PC-9 (cell line): ENCODE measurements at regions of chr19 and their contacts with region 1.

Region 1: DNA sequence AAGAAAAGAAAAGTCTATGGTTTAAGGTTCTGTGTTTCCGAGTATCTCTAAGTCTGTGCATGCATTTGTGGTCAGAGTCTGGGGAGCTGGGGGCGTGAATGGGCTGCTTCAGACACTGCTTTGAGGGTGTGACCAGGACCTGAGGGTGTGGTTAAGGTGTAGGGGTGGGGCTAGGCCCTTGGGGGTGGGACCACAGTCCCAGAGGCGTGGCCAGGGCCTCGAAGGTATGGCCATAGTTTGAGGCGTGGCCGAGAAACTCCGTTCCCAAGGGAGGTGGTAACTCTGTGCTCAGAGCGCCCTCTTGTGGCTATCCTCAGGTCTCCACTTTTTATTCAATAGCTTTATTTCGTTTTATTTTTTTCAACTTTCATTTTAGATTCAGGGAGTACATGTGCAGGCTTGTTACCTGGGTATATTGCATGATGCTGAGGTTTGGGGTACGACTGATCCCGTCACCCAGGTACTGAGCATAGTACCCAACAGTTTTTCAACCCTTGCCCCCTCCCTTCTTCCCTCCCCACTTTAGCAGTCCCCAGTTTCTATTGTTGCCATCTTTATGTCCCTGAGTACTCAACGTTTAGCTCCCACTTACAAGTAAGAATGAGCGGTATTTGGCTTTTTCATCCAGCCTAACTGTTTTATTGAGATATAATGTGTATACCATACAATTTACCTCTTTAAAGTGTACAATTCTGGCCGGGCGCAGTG is 7.0 kb upstream of the CBLC start:
- DNase-seq: peak; percentile 90 to 97
- H3K4me3 ChIP-seq: no peak overlapping the region
- H3K27ac ChIP-seq: peak overlapping the region; percentile 48
- H3K4me1 ChIP-seq: peaks cover 48% of the 10 kb centered on the region
- H3K27me3 ChIP-seq: no peaks in the 10 kb centered on the region
- CTCF ChIP-seq: peak; percentile 96

Region 2: GRCh38 chr19:44512326-44513298 is 258.1 kb before region 1 on chr19:
- CTCF ChIA-PET with region 1: no interaction called
- POLR2A ChIA-PET with region 1: no interaction called
- intact Hi-C with region 1: loop called (anchors 5 kb)
- DNase-seq: peak; percentile 50 to 73
- H3K4me3 ChIP-seq: no peak overlapping the region
- H3K27ac ChIP-seq: no peak overlapping the region
- H3K4me1 ChIP-seq: no peaks in the 10 kb centered on the region; the same call in 1 of the 2 replicates
- H3K27me3 ChIP-seq: peaks cover 10% of the 10 kb centered on the region; the same call in 1 of the 2 replicates
- CTCF ChIP-seq: peak; percentile 77

Region 3: DNA sequence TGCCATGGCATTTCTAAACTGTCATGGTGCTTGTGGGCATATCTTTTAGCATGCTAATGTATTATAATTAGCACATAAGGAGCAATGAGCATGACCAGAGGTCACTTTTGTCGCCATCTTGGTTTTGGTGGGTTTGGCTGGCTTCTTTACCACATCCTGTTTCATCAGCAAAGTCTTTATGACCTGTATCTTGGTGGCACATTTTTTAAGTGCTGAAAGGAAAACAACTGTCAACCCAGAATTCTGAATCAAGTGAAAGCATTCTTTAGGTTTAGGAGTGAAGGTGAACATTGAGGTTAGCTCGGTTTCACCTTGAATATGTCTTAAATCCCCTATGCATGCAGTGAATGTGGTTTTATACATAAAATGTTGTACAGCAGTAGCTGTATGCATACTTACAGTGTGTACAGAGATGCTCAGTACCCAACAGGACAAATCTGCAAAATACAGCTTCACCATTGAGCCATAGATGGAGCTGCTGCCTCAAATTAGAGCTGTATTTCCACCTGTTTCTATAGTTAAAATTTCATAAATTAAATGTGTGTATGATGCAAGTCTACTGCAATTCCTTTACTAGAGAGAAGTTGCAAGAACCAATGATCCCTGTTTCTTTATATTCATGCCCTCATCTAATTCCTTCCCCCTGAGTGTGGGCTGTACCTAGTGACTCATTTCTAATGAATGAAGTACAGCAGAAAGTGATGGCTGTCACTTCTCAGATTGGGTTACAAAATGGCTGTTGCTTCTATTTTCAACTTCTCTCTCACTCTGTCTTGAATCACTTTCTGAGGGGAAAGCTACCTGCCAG is 182.5 kb before region 1 on chr19:
- CTCF ChIA-PET with region 1: interaction called, 4 read pairs
- POLR2A ChIA-PET with region 1: no interaction called
- intact Hi-C with region 1: loop called (anchors 1 kb)
- DNase-seq: peak; percentile 64 to 99
- H3K4me3 ChIP-seq: peak overlapping the region; percentile 28
- H3K27ac ChIP-seq: peak overlapping the region; percentile 98
- H3K4me1 ChIP-seq: peaks cover 82% of the 10 kb centered on the region
- H3K27me3 ChIP-seq: no peaks in the 10 kb centered on the region
- CTCF ChIP-seq: peak; percentile 75

Region 4: DNA sequence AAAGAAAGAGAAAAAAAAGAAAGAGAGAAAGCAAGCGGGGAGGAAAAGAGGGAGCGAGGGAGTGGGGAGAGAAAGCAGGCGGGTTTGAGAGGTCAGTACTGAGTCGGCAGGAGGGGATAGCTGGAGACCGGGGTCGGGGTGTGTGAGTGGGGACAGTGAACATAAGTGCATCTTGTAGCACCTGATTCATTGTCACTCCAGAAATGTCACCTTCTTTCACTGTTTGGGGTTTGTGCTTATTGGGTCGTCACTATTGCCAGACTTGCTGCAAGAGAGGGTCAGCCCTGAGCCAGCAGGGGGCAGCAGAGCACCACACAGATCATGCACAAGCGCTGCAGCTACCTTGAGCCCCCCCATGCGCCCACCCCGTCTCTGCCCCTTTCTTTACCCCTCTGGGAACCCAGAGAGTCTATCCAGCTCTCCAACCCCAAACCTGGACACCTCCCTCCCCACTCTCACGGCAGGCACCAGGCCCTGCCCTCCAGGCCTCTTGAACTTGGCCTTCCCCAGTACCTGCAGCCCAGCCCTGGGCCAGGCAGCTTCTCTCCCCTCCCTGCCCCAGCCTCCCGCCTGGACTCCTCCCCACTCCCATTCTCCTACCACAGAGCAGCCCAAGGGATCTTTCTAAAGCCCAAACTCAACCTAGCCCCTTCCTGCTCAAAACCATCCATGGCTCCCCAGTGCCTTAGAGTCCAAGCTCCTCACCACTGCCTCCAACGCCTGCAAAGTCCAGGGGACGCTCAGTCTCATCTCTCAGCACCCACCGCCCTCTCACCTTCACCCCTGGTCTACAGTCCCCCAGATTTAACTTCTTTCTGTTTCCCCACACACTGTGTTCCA is 81.4 kb before region 1 on chr19:
- CTCF ChIA-PET with region 1: interaction called, 11 read pairs
- POLR2A ChIA-PET with region 1: interaction called, 25 read pairs
- intact Hi-C with region 1: loop called (anchors 1 kb)
- DNase-seq: peak; percentile 60 to 76
- H3K4me3 ChIP-seq: no peak overlapping the region
- H3K27ac ChIP-seq: peak overlapping the region; percentile 100
- H3K4me1 ChIP-seq: peaks cover 83% of the 10 kb centered on the region
- H3K27me3 ChIP-seq: no peaks in the 10 kb centered on the region
- CTCF ChIP-seq: peak; percentile 98

Region 5: GRCh38 chr19:44723952-44724319 is 46.8 kb before region 1 on chr19:
- CTCF ChIA-PET with region 1: interaction called, 55 read pairs
- POLR2A ChIA-PET with region 1: interaction called, 26 read pairs
- intact Hi-C with region 1: loop called (anchors 1 kb)
- DNase-seq: peak; percentile 74 to 88
- H3K4me3 ChIP-seq: no peak overlapping the region
- H3K27ac ChIP-seq: peak overlapping the region; percentile 62
- H3K4me1 ChIP-seq: peaks cover 66% of the 10 kb centered on the region
- H3K27me3 ChIP-seq: no peaks in the 10 kb centered on the region
- CTCF ChIP-seq: peak; percentile 98

Region 6: GRCh38 chr19:44954824-44955586 is 184.3 kb after region 1 on chr19 and contains the start of gene CLPTM1:
- CTCF ChIA-PET with region 1: no interaction called
- POLR2A ChIA-PET with region 1: no interaction called
- intact Hi-C with region 1: loop called (anchors 10 kb)
- DNase-seq: peak; percentile 93 to 94
- H3K4me3 ChIP-seq: peak within 1 kb of the TSS; percentile 89
- H3K27ac ChIP-seq: peak within 1 kb of the TSS; percentile 87
- H3K4me1 ChIP-seq: peaks cover 20% of the 10 kb centered on the region
- H3K27me3 ChIP-seq: no peaks in the 10 kb centered on the region
- CTCF ChIP-seq: no peak
- total RNA-seq, gene CLPTM1: 98.2 and 111 TPM in 2 replicates

Region 7: DNA sequence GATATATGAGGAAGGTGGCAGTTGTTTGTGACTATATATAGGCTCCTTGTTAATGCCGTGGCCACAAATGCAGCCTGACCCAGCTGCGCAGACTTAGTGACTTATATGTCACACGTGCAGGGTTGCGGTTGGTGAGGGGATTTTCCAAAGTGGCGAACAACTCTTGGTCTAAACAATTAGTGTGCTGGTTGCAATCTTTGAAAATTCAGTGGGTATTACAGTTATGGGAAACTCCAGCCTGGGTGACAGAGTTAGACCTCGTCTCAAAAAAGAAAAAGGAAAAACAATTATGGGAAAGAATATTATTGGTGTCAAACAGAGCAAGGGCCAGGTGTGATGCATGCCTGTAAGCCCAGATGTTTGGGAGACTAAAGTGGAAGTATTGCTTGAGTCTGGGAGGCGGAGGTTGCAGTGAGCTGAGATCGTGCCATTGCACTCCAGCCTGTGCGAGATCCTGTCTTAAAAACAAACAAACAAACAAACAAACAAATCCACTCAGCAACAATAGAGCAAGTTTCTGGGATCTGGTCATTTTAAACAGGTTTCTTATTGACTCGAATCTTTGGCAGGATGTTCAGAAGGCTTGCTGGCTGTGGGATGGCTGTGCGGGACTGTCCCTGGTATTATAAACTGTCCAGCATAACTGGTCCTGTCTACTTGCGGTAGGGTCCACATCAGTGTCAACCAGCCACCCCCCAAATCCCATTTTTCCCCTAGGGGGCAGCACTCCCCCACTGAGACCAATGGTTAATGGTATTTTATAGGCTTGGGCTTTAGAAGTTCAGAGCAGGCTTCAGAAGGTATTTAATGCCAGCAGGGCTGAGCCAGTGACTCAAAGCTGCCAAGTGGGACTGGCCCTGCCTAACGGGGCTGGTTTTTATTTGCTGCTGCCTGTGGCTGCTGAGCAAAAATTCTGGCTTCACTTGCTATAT is 245.9 kb after region 1 on chr19:
- CTCF ChIA-PET with region 1: no interaction called
- POLR2A ChIA-PET with region 1: no interaction called
- intact Hi-C with region 1: no loop called
- DNase-seq: peak; percentile 67 to 75
- H3K4me3 ChIP-seq: no peak overlapping the region
- H3K27ac ChIP-seq: no peak overlapping the region
- H3K4me1 ChIP-seq: no peaks in the 10 kb centered on the region
- H3K27me3 ChIP-seq: no peaks in the 10 kb centered on the region
- CTCF ChIP-seq: peak; percentile 80